K562 (cell line): ENCODE measurements at regions of chr17 and their contacts with region 1.

Region 1: DNA sequence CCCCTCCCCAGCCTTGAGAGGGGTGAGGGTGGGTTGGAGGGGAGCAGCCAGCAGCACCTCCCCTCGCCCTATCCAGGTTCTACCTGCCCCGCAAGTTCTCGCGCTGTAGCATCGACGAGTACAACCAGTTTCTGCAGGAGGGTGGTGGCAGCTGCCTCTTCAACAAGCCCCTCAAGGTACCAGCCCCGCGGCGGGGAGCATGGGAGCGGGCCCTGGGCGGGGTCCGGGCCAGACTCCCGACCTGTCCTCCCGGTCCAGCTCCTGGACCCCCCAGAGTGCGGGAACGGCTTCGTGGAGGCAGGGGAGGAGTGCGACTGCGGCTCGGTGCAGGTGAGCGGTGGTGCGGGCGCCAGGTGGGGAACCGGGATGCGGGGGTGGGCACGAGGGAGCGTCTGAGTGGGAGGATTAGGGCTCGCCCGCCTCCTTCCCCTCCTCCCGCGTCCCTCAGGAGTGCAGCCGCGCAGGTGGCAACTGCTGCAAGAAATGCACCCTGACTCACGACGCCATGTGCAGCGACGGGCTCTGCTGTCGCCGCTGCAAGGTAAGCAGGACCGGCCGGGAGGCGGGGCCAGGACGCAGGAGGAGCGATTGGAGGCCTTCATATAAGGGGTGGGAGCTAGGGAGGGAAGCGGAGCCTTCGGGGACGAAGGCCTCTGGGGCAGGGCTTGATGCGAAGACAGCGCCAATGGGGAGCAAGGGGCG is 16.5 kb downstream of the ADAM11 start:
- DNase-seq: peak in 2 of 4 experiments; percentile 98 to 99
- ATAC-seq: peak; percentile 96
- H3K4me3 ChIP-seq: peak overlapping the region; percentile 48
- H3K27ac ChIP-seq: no peak overlapping the region
- H3K4me1 ChIP-seq: peaks cover 10 to 68% of the 10 kb centered on the region in 2 experiments; a peak in 4 of 5 replicates
- H3K27me3 ChIP-seq: peaks cover 6 to 28% of the 10 kb centered on the region in 2 experiments; a peak in 4 of 5 replicates
- CTCF ChIP-seq: no peak
- EP300 ChIP-seq: no peak
- POLR2A ChIP-seq: peak; percentile 62
- RAD21 ChIP-seq: no peak

Region 2: DNA sequence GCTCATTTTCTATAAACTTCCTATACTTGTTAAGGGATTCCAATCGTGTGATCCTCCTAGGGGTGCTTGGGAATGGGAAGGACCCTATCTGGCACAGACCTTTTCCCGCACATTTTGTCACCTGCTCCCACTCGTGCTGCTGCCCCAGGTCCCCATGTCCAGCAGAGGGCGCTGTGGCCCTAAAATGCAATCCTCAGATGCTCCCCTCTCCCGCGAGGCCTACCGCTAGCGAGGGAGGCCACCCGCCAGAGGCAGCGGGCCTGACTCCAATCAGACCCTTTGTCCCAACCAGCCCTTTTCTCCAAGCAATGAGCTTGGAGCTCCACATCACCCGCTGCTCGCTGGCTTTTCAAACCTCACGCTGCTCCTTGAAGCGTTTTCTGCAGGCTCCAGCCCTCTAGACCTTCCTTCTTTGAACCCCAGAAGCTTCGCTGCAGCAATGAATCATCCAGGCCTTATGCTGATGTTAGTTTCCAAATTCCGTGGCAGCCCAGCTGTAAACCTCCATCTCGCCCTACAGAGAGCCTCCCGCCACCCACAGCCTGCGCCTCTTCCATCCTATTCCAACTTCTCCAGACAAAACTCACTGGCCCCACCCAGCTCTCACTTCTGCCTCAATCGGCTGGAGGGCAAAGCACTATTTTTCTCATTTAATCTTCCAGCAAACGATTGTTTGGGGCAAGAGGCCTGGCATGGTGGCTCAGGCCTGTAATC is 241.6 kb before region 1 on chr17:
- CTCF ChIA-PET with region 1: no interaction called
- POLR2A ChIA-PET with region 1: no interaction called
- in situ Hi-C with region 1: no loop called
- intact Hi-C with region 1: loop called (anchors 10 kb)
- DNase-seq: peak; percentile 92 to 93 (median 92)
- ATAC-seq: peak; percentile 97
- H3K4me3 ChIP-seq: no peak overlapping the region
- H3K27ac ChIP-seq: no peak overlapping the region
- H3K4me1 ChIP-seq: peaks cover 7 to 11% of the 10 kb centered on the region in 2 experiments; a peak in 2 of 5 replicates
- H3K27me3 ChIP-seq: peaks cover 0 to 5% of the 10 kb centered on the region in 2 experiments; a peak in 1 of 5 replicates
- CTCF ChIP-seq: peak; percentile 93 to 96 (median 96)
- EP300 ChIP-seq: no peak
- POLR2A ChIP-seq: no peak
- RAD21 ChIP-seq: peak; percentile 94 to 97

Region 3: DNA sequence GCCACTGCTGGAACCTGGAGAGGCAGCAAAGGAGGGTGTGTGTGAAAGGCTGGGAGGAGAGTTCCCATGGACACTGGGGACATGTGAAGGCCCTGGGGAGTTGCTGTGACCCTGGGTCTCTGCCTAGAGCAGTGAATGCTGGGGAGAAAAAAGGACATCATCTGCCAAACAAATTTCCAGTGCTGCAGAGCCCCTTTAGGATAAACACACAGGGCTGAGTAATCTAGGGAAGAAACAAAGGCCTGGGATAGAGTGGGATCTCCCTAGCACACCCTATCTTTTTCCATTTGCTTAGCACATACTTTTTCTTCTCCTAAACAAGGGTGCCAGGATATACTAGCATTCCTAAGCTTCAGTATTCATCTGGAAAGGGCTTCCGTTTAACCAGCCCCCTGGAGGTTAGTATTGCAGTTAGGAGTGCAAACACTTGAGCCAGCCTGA is 69.1 kb after region 1 on chr17:
- CTCF ChIA-PET with region 1: no interaction called
- POLR2A ChIA-PET with region 1: interaction called, 3 read pairs
- in situ Hi-C with region 1: no loop called
- intact Hi-C with region 1: loop called (anchors 5 kb)
- DNase-seq: no peak
- ATAC-seq: no peak
- H3K4me3 ChIP-seq: no peak overlapping the region
- H3K27ac ChIP-seq: no peak overlapping the region
- H3K4me1 ChIP-seq: no peaks in the 10 kb centered on the region; a peak in 1 of 5 replicates
- H3K27me3 ChIP-seq: no peaks in the 10 kb centered on the region
- CTCF ChIP-seq: no peak
- EP300 ChIP-seq: no peak
- POLR2A ChIP-seq: no peak
- RAD21 ChIP-seq: no peak

Region 4: DNA sequence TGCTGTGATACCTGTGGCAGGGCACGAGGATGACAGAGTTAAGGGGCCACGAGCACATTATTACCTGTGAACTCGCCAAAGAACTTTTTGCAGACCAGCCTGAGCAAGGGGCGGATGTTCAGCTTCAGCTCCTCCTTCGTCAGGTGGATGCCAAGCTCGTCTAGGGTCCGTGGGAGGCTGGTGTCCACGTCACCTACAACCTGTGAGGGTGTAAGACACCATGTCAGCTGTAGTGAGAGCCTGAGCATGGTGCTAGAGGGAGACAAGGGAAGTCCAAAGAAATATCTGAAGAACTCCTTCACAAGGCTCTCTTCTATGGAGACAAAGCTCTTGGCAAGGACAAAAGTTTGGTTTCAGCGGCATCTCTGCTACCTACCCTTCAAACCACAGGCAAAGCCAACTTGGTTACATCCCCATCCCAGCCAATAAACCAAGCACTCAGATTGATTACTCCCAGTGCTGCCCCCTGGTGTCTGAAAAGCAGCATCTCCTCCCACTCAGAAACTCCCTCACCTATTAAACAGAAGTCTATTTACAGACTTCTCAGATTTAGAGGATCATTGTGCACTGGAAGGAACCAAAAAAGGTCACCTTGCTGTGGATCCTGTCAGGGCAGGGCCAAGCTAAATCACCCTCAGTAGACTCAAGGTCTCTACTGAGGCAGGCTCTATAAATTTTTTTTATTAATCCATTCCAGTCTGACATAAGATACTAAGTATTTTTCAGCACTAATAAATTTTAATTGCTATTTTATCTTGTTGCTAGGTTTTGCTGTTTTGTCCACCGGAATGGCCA is 89.8 kb after region 1 on chr17:
- CTCF ChIA-PET with region 1: interaction called, 38 read pairs
- POLR2A ChIA-PET with region 1: interaction called, 4 read pairs
- in situ Hi-C with region 1: loop called (anchors 5 kb)
- intact Hi-C with region 1: loop called (anchors 1 kb)
- DNase-seq: peak; percentile 67 to 75 (median 71)
- ATAC-seq: peak; percentile 92
- H3K4me3 ChIP-seq: no peak overlapping the region
- H3K27ac ChIP-seq: no peak overlapping the region
- H3K4me1 ChIP-seq: no peaks in the 10 kb centered on the region
- H3K27me3 ChIP-seq: no peaks in the 10 kb centered on the region
- CTCF ChIP-seq: peak; percentile 77 to 81 (median 78)
- EP300 ChIP-seq: no peak
- POLR2A ChIP-seq: no peak
- RAD21 ChIP-seq: peak; percentile 51 to 66

Region 5: GRCh38 chr17:44878627-44879221 is 103.4 kb after region 1 on chr17:
- CTCF ChIA-PET with region 1: interaction called, 14 read pairs
- POLR2A ChIA-PET with region 1: no interaction called
- in situ Hi-C with region 1: no loop called
- intact Hi-C with region 1: no loop called
- DNase-seq: peak in 3 of 4 experiments; percentile 34 to 45 (median 42)
- ATAC-seq: peak; percentile 56; the same call in 2 of the 3 replicates
- H3K4me3 ChIP-seq: no peak overlapping the region
- H3K27ac ChIP-seq: no peak overlapping the region
- H3K4me1 ChIP-seq: no peaks in the 10 kb centered on the region
- H3K27me3 ChIP-seq: no peaks in the 10 kb centered on the region
- CTCF ChIP-seq: peak; percentile 43 to 69 (median 58); a peak in 5 of 6 replicates
- EP300 ChIP-seq: no peak
- POLR2A ChIP-seq: no peak
- RAD21 ChIP-seq: peak in 1 of 2 experiments; percentile 52; a peak in 3 of 4 replicates

Region 6: GRCh38 chr17:45021607-45022287 is 246.5 kb after region 1 on chr17:
- CTCF ChIA-PET with region 1: interaction called, 3 read pairs
- POLR2A ChIA-PET with region 1: no interaction called
- in situ Hi-C with region 1: loop called (anchors 10 kb)
- intact Hi-C with region 1: loop called (anchors 10 kb)
- DNase-seq: peak; percentile 84 to 90 (median 89)
- ATAC-seq: peak; percentile 87
- H3K4me3 ChIP-seq: peak overlapping the region; percentile 18; the same call in 1 of the 2 replicates
- H3K27ac ChIP-seq: peak overlapping the region; percentile 55; the same call in 2 of the 3 replicates
- H3K4me1 ChIP-seq: peaks cover 24 to 39% of the 10 kb centered on the region in 2 experiments; a peak in 4 of 5 replicates
- H3K27me3 ChIP-seq: no peaks in the 10 kb centered on the region
- CTCF ChIP-seq: peak; percentile 78 to 92 (median 82)
- EP300 ChIP-seq: no peak
- POLR2A ChIP-seq: no peak
- RAD21 ChIP-seq: peak; percentile 76 to 77

Region 7: GRCh38 chr17:45135192-45135977 is 360.1 kb after region 1 on chr17 and contains the start of gene ACBD4:
- CTCF ChIA-PET with region 1: interaction called, 5 read pairs
- POLR2A ChIA-PET with region 1: no interaction called
- in situ Hi-C with region 1: no loop called
- intact Hi-C with region 1: loop called (anchors 5 kb)
- DNase-seq: peak; percentile 81 to 98 (median 90)
- ATAC-seq: peak; percentile 90
- H3K4me3 ChIP-seq: peak within 1 kb of the TSS; percentile 52
- H3K27ac ChIP-seq: peak within 1 kb of the TSS; percentile 74; the same call in 2 of the 3 replicates
- H3K4me1 ChIP-seq: peaks cover 11 to 49% of the 10 kb centered on the region in 2 experiments
- H3K27me3 ChIP-seq: no peaks in the 10 kb centered on the region
- CTCF ChIP-seq: peak; percentile 100
- EP300 ChIP-seq: peak; percentile 53; the same call in 1 of the 2 replicates
- POLR2A ChIP-seq: peak; percentile 55; the same call in 1 of the 2 replicates
- RAD21 ChIP-seq: peak; percentile 100
- polyA plus RNA-seq, gene ACBD4: 0.14 to 0.15 TPM